ENCODE measurements at regions of chr13 and their contacts with region 1.

Region 1: GRCh38 chr13:57734306-57734705 is 102.8 kb downstream of the PCDH17 start:
- DNase-seq: no peak
- H3K4me3 ChIP-seq: no peak overlapping the region
- H3K27ac ChIP-seq: no peak overlapping the region
- H3K4me1 ChIP-seq: no peaks in the 10 kb centered on the region
- H3K27me3 ChIP-seq: no peaks in the 10 kb centered on the region
- CTCF ChIP-seq: no peak
- EP300 ChIP-seq: no peak
- POLR2A ChIP-seq: no peak

Region 2: GRCh38 chr13:57763689-57764088 is 29.4 kb after region 1 on chr13:
- intact Hi-C with region 1: loop called in 1 of 4 experiments (anchors 2 kb)
- DNase-seq: no peak
- H3K4me3 ChIP-seq: no peak overlapping the region
- H3K27ac ChIP-seq: no peak overlapping the region
- H3K4me1 ChIP-seq: no peaks in the 10 kb centered on the region
- H3K27me3 ChIP-seq: no peaks in the 10 kb centered on the region
- CTCF ChIP-seq: no peak
- EP300 ChIP-seq: no peak
- POLR2A ChIP-seq: no peak